HCT116 (cell line): ENCODE measurements at regions of chr18 and their contacts with region 1.

Region 1: GRCh38 chr18:54679318-54680149 is 88.5 kb downstream of the DYNAP start:
- DNase-seq: peak; percentile 62
- ATAC-seq: peak; percentile 90
- H3K4me3 ChIP-seq: no peak overlapping the region
- H3K27ac ChIP-seq: no peak overlapping the region
- H3K4me1 ChIP-seq: no peaks in the 10 kb centered on the region
- H3K27me3 ChIP-seq: no peaks in the 10 kb centered on the region
- CTCF ChIP-seq: peak; percentile 48 to 86 (median 66); a peak in 5 of 6 replicates
- POLR2A ChIP-seq: no peak
- RAD21 ChIP-seq: peak; percentile 90

Region 2: DNA sequence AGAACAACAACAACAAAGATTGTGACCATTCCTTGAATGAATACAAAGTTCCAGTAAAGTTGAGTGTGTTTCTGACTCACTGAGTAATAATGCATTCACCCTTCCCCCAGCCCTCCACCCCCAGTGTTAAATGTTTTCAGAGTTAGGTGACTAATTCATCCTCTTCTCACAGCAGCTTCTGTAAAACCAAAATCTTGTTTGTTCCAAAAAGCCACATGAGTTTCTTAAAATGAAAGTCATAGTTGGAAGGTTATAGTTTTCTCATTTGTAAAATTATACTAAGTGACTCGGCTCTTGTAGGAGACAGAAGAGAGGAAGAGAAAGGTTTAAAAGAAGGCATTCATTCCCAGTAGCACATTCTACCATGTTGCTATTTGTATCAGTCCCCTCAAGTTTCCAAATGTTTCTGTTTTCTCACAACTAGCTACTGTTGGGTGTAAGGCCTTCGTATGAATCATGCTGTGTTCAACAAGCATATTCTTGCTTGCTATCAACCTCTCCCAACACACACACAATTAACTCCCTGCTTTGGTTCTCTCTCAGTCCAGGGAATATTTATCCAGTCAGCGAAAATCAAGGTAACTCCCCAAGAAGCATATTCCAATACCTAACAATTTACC is 530.3 kb before region 1 on chr18:
- CTCF ChIA-PET with region 1: no interaction called
- POLR2A ChIA-PET with region 1: no interaction called
- RAD21 ChIA-PET with region 1: no interaction called
- intact Hi-C with region 1: loop called (anchors 10 kb)
- DNase-seq: peak; percentile 63
- ATAC-seq: peak; percentile 87
- H3K4me3 ChIP-seq: peak overlapping the region; percentile 11 to 44; a peak in 3 of 4 replicates
- H3K27ac ChIP-seq: peak overlapping the region; percentile 74
- H3K4me1 ChIP-seq: peaks cover 25 to 37% of the 10 kb centered on the region in 2 experiments
- H3K27me3 ChIP-seq: no peaks in the 10 kb centered on the region
- CTCF ChIP-seq: no peak
- POLR2A ChIP-seq: no peak
- RAD21 ChIP-seq: 0 out of 2 replicates have a peak, but pooled peaks have one; percentile 15

Region 3: DNA sequence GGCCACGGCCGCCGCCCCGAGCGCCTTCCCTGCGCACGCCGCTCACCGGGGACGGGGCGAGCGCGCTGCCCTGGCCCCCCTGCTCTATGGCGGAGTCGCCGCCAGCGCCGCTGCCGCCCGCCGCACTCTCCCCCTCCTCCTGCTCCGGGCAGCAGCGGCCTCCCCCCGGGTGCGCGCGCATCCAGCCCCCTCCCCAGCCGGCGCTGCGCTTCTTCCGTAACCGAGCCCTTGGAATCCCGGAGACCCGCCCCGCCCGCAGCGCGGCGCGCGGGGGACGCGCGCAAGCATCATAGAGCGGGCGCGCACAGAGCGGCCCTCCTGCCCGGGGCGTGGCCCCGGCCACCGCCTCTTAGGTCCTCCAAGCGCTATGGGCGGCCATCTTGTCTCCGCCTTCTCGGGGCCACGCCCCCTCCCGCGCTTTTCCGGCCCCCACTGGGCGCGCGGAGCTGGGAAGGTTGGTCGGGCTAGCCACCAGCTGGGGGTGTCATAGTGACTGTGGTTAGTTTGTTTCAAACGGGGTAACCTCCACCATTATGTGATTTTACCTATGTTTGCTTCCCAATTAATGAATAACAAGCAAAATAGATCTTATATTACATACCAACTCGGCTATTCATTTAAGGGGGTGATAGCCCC is 455.0 kb before region 1 on chr18 and contains the start of gene MBD2:
- CTCF ChIA-PET with region 1: no interaction called
- POLR2A ChIA-PET with region 1: no interaction called
- RAD21 ChIA-PET with region 1: no interaction called
- intact Hi-C with region 1: loop called (anchors 10 kb)
- DNase-seq: peak; percentile 89
- ATAC-seq: peak; percentile 96
- H3K4me3 ChIP-seq: peak within 1 kb of the TSS; percentile 67 to 81
- H3K27ac ChIP-seq: peak within 1 kb of the TSS; percentile 71
- H3K4me1 ChIP-seq: peaks cover 10 to 17% of the 10 kb centered on the region in 2 experiments
- H3K27me3 ChIP-seq: no peaks in the 10 kb centered on the region
- CTCF ChIP-seq: peak; percentile 8 to 28 (median 16); a peak in 3 of 6 replicates
- POLR2A ChIP-seq: peak; percentile 57
- RAD21 ChIP-seq: peak; percentile 36
- total RNA-seq, gene MBD2: 79.1 TPM

Region 4: GRCh38 chr18:54946149-54946581 is 266.6 kb after region 1 on chr18:
- CTCF ChIA-PET with region 1: interaction called, 19 read pairs
- POLR2A ChIA-PET with region 1: no interaction called
- RAD21 ChIA-PET with region 1: interaction called in 1 of 2 experiments, 4 read pairs
- intact Hi-C with region 1: loop called (anchors 1 kb)
- DNase-seq: peak; percentile 26
- ATAC-seq: peak; percentile 73
- H3K4me3 ChIP-seq: peak overlapping the region; percentile 39 to 61
- H3K27ac ChIP-seq: no peak overlapping the region; the same call in 1 of the 2 replicates
- H3K4me1 ChIP-seq: peaks cover 10 to 21% of the 10 kb centered on the region in 2 experiments
- H3K27me3 ChIP-seq: no peaks in the 10 kb centered on the region
- CTCF ChIP-seq: no peak
- POLR2A ChIP-seq: no peak
- RAD21 ChIP-seq: no peak; the same call in 1 of the 2 replicates

Region 5: DNA sequence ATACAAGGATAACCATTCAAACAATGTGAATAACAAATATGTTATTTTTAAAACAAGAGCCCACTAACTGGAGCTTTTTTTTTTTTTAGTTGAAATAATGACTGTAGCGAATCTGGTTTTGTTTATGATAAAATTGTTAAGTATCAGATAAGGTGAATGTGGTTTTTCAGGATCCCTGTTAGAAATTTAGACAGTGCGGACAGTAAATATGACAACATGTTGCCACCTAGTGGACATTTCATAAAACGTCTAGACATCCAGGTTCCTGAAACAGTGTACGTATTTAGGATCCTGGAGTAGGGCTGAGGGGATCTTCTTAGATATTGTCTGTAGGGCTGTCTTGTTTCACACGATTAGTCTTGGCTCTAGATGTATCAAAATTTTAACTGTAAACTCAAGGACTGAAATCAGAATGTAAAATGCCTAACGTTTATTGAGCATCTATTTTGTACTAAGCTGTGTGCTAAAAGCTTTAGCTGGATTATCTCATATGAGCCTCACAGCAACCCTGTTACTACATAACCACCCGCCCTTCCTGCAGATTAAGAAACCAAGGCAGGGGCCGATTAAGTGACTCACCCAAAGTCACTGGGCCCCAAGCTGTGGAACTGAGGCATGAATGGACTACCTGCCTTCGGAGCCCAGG is 303.6 kb after region 1 on chr18:
- CTCF ChIA-PET with region 1: interaction called, 22 read pairs
- POLR2A ChIA-PET with region 1: no interaction called
- RAD21 ChIA-PET with region 1: interaction called, 3 to 7 read pairs
- intact Hi-C with region 1: loop called (anchors 1 kb)
- DNase-seq: peak; percentile 47
- ATAC-seq: peak; percentile 96
- H3K4me3 ChIP-seq: no peak overlapping the region
- H3K27ac ChIP-seq: no peak overlapping the region
- H3K4me1 ChIP-seq: peaks cover 0 to 4% of the 10 kb centered on the region in 2 experiments; a peak in 1 of 4 replicates
- H3K27me3 ChIP-seq: no peaks in the 10 kb centered on the region
- CTCF ChIP-seq: peak; percentile 46 to 74 (median 67); a peak in 5 of 6 replicates
- POLR2A ChIP-seq: no peak
- RAD21 ChIP-seq: peak; percentile 86

Region 6: GRCh38 chr18:55179835-55180234 is 500.3 kb after region 1 on chr18:
- CTCF ChIA-PET with region 1: no interaction called
- POLR2A ChIA-PET with region 1: no interaction called
- RAD21 ChIA-PET with region 1: no interaction called
- intact Hi-C with region 1: no loop called
- DNase-seq: no peak
- ATAC-seq: no peak
- H3K4me3 ChIP-seq: no peak overlapping the region
- H3K27ac ChIP-seq: no peak overlapping the region
- H3K4me1 ChIP-seq: no peaks in the 10 kb centered on the region
- H3K27me3 ChIP-seq: no peaks in the 10 kb centered on the region
- CTCF ChIP-seq: no peak
- POLR2A ChIP-seq: no peak
- RAD21 ChIP-seq: no peak

Region 7: GRCh38 chr18:56575819-56576663 is 1896.5 kb after region 1 on chr18:
- CTCF ChIA-PET with region 1: no interaction called
- POLR2A ChIA-PET with region 1: no interaction called
- RAD21 ChIA-PET with region 1: no interaction called
- intact Hi-C with region 1: loop called (anchors 5 kb)
- DNase-seq: peak; percentile 43
- ATAC-seq: peak; percentile 88
- H3K4me3 ChIP-seq: no peak overlapping the region
- H3K27ac ChIP-seq: no peak overlapping the region
- H3K4me1 ChIP-seq: no peaks in the 10 kb centered on the region
- H3K27me3 ChIP-seq: no peaks in the 10 kb centered on the region; the same call in 1 of the 2 replicates
- CTCF ChIP-seq: peak; percentile 44 to 73 (median 47); a peak in 5 of 6 replicates
- POLR2A ChIP-seq: no peak
- RAD21 ChIP-seq: peak; percentile 73